ENCODE measurements at regions of chr19 and their contacts with region 1.

Region 1: DNA sequence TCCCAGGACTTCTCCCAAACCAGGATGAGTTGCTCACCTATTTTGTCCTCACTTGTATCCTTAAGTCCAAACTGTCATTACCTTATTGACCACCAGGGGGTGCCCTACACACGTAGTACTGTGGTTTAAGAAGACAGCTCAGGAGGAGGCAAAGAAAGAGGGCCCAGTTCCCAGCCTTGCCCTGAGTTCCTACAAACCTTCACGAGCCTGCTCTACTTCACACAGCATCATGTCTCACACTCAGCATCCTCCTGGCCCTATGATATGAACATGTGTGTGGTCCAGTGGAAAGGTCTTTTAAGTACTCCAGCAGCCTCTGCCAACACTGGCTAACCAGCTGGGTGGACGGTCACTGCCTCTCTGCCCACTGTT is 8.1 kb upstream of the ZNF784 start:
- DNase-seq: peak; percentile 81 to 92 (median 87)
- H3K4me3 ChIP-seq: no peak overlapping the region
- H3K4me3 Mint-ChIP-seq: peak overlapping the region in 4 of 7 donors; percentile 2 to 69 (median 36)
- H3K27ac ChIP-seq: no peak overlapping the region
- H3K27ac Mint-ChIP-seq: peak overlapping the region in 7 of 8 donors; percentile 6 to 83 (median 57)
- H3K4me1 ChIP-seq: peaks cover 43% of the 10 kb centered on the region
- H3K4me1 Mint-ChIP-seq: peaks cover 38 to 49% (median 47%) of the 10 kb centered on the region in 3 donors
- H3K27me3 ChIP-seq: no peaks in the 10 kb centered on the region
- H3K27me3 Mint-ChIP-seq: peaks cover 0 to 7% of the 10 kb centered on the region in 2 donors

Region 2: DNA sequence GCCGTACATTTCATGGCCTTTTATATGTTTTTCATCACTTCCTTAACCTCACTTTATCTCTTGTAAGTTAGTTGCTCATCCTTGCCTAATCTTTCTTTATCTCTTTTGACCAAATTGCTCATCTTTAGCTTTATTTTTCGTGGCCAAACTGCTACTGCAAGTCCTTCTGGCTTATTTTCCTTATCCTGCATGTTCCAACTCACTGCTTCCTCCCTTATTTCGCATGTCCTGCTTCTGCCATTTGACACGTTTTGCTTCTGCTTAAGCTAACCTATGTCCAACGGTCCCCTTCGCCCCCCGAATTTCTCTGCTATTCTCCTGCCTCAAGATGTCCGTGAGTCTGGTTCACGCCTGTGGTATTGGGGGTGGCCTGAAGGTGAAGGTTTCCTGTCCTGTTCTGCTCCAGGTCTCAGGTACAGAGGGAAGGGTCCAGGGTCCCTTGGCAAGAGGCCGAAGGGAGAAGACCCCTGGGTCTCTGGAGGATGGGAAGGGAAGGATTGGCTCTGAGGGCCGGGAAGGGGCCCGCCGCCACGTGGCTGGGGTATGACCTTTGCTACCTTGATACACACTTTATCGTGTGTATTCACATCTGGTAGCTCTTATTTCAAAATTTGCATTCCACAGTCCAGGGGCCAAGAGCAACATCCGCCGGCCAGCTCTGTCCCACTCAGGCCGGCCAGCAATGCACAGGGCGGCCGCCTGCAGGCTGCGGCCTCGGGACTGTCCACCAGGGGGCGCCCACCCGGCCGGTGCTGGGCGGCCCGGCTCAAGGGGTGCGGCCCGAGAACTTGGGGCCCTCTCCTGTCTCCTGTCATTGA is 165.0 kb before region 1 on chr19:
- CTCF ChIA-PET with region 1: interaction called, 19 read pairs
- POLR2A ChIA-PET with region 1: no interaction called
- DNase-seq: peak; percentile 53 to 73 (median 69)
- H3K4me3 ChIP-seq: no peak overlapping the region
- H3K4me3 Mint-ChIP-seq: peak overlapping the region in 1 of 7 donors; percentile 54
- H3K27ac ChIP-seq: peak overlapping the region; percentile 81
- H3K27ac Mint-ChIP-seq: peak overlapping the region in 2 of 8 donors; percentile 22 to 47
- H3K4me1 ChIP-seq: peaks cover 8% of the 10 kb centered on the region
- H3K4me1 Mint-ChIP-seq: peaks cover 6 to 7% (median 6%) of the 10 kb centered on the region in 3 donors
- H3K27me3 ChIP-seq: no peaks in the 10 kb centered on the region
- H3K27me3 Mint-ChIP-seq: peaks cover 0 to 3% of the 10 kb centered on the region in 2 donors

Region 3: DNA sequence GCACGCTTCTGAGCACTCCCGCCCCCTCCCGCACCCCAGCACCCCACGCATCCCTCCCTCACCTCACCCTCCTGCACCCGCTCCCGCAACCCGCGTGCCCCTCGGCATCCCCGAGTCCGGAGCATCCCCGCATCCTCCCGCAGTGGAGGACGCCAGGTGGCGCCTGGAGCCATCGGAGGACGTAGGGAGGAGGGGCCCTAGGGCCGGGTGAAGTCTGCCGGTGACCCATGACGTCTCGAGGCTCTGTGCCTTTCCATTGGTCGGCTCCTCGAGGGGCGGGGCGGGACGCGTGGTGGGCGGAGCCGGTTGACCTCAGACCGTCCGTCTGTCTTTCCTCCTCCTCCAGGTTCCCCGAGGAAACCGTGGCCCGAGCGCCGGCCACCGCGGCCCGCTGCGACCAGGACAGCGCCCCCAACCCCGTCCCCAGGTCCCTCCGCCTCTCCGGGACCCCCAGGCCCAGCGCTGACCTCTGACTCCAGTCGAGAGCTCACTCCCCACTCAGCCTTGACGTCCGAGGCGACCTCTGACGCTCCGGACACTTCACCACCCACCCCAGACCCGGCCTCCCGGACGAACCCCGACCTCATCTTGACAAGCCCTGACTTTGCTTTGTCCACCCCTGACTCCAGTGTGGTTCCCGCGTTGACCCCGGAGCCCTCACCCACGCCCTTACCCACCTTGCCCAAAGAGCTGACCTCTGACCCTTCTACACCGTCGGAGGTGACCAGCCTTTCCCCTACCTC is 115.4 kb before region 1 on chr19:
- CTCF ChIA-PET with region 1: interaction called, 74 read pairs
- POLR2A ChIA-PET with region 1: interaction called, 10 read pairs
- DNase-seq: peak; percentile 85 to 93 (median 86)
- H3K4me3 ChIP-seq: peak overlapping the region; percentile 38
- H3K4me3 Mint-ChIP-seq: peak overlapping the region; percentile 51 to 84 (median 81)
- H3K27ac ChIP-seq: no peak overlapping the region
- H3K27ac Mint-ChIP-seq: peak overlapping the region; percentile 27 to 94 (median 86)
- H3K4me1 ChIP-seq: peaks cover 5% of the 10 kb centered on the region
- H3K4me1 Mint-ChIP-seq: peaks cover 3 to 4% (median 4%) of the 10 kb centered on the region in 3 donors
- H3K27me3 ChIP-seq: no peaks in the 10 kb centered on the region
- H3K27me3 Mint-ChIP-seq: peaks cover 3 to 15% of the 10 kb centered on the region in 2 donors

Region 4: DNA sequence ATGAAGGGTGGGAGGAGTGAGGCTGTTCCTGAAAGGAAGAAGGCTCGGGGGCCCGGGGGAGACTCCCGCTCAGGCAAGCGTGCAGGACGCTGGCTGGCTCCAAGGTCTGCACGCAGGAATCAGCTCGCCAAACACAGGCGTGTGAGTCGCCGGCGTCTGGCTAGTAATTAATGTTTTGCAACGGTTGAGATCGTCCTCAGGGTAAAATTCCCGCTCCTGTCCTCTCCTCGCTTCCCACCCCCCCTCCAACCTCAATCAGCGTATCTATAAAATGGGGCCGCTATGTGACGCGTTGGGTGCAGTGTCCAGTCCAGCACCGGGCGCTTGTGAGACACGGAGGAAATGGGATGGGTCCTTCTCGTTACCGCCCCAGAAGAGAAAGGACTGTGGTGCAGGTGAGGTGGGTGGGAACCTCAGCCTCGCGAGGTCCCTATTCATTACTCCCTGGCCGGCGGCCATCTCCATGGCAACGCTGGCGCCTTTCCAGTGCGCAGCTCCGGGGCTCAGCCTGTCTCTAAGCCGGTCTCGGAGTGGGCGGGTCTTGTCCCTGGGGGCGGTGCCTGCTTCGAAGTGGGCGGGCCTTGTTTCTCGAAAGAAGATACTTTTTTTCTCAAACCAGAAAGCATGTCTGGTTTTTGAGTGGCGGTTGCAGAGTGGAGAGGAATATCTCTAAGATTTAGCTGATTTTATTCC is 45.3 kb before region 1 on chr19:
- CTCF ChIA-PET with region 1: interaction called, 11 read pairs
- POLR2A ChIA-PET with region 1: interaction called, 3 read pairs
- DNase-seq: peak; percentile 87 to 95 (median 89)
- H3K4me3 ChIP-seq: peak overlapping the region; percentile 66
- H3K4me3 Mint-ChIP-seq: peak overlapping the region; percentile 78 to 93 (median 87)
- H3K27ac ChIP-seq: peak overlapping the region; percentile 2
- H3K27ac Mint-ChIP-seq: peak overlapping the region; percentile 54 to 93 (median 84)
- H3K4me1 ChIP-seq: peaks cover 22% of the 10 kb centered on the region
- H3K4me1 Mint-ChIP-seq: peaks cover 22 to 31% (median 27%) of the 10 kb centered on the region in 3 donors
- H3K27me3 ChIP-seq: no peaks in the 10 kb centered on the region
- H3K27me3 Mint-ChIP-seq: peaks cover 8 to 12% of the 10 kb centered on the region in 2 donors

Region 5: GRCh38 chr19:55643348-55644176 is 11.1 kb after region 1 on chr19 and contains the start of gene ZNF581:
- CTCF ChIA-PET with region 1: interaction called, 26 read pairs
- POLR2A ChIA-PET with region 1: interaction called, 12 read pairs
- DNase-seq: peak; percentile 65 to 84 (median 72)
- H3K4me3 ChIP-seq: peak within 1 kb of the TSS; percentile 95
- H3K4me3 Mint-ChIP-seq: peak within 1 kb of the TSS; percentile 84 to 98 (median 94)
- H3K27ac ChIP-seq: peak within 1 kb of the TSS; percentile 72
- H3K27ac Mint-ChIP-seq: peak within 1 kb of the TSS; percentile 85 to 98 (median 96)
- H3K4me1 ChIP-seq: peaks cover 34% of the 10 kb centered on the region
- H3K4me1 Mint-ChIP-seq: peaks cover 44 to 63% (median 58%) of the 10 kb centered on the region in 3 donors
- H3K27me3 ChIP-seq: no peaks in the 10 kb centered on the region
- H3K27me3 Mint-ChIP-seq: no peaks in the 10 kb centered on the region
- total RNA-seq, gene ZNF581: 32.8 to 34.4 TPM

Region 6: GRCh38 chr19:55653758-55654539 is 21.5 kb after region 1 on chr19:
- CTCF ChIA-PET with region 1: interaction called, 26 read pairs
- POLR2A ChIA-PET with region 1: interaction called, 12 read pairs
- DNase-seq: peak; percentile 99 to 100 (median 100)
- H3K4me3 ChIP-seq: peak overlapping the region; percentile 89
- H3K4me3 Mint-ChIP-seq: peak overlapping the region; percentile 90 to 97 (median 95)
- H3K27ac ChIP-seq: peak overlapping the region; percentile 91
- H3K27ac Mint-ChIP-seq: peak overlapping the region; percentile 96 to 99 (median 98)
- H3K4me1 ChIP-seq: peaks cover 38% of the 10 kb centered on the region
- H3K4me1 Mint-ChIP-seq: peaks cover 31 to 48% (median 32%) of the 10 kb centered on the region in 3 donors
- H3K27me3 ChIP-seq: no peaks in the 10 kb centered on the region
- H3K27me3 Mint-ChIP-seq: peaks cover 0 to 7% of the 10 kb centered on the region in 2 donors

Measured in CD8-positive, alpha-beta memory T cell (primary cell).